Right ventricle myocardium inferior (tissue), 1 donor: ENCODE measurements at regions of chr13 and their contacts with region 1.

Region 1: GRCh38 chr13:106536244-106537034 is 977 bp upstream of the EFNB2 start:
- DNase-seq: peak; percentile 95
- ATAC-seq: peak; percentile 79

Region 2: DNA sequence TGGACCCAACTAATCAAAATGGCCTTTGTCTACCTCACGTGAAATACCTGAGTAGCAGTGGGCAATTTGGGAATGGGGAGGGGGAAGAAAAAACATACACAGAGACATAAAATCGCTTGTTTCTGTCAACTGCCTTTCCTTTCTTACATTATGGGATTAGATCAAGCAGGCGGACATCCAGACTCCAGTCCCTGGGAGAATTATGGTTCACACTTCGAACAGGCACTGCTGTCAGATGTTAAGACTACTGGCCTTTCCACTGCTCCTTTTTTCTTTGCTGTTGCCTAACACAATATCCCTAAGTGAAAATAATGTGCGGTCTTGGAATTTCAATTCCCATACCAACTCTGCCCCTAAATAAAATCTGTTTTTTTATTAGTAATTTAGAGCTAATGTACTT is 1750.5 kb before region 1 on chr13:
- intact Hi-C with region 1: loop called (anchors 10 kb)
- DNase-seq: no peak
- ATAC-seq: no peak

Region 3: DNA sequence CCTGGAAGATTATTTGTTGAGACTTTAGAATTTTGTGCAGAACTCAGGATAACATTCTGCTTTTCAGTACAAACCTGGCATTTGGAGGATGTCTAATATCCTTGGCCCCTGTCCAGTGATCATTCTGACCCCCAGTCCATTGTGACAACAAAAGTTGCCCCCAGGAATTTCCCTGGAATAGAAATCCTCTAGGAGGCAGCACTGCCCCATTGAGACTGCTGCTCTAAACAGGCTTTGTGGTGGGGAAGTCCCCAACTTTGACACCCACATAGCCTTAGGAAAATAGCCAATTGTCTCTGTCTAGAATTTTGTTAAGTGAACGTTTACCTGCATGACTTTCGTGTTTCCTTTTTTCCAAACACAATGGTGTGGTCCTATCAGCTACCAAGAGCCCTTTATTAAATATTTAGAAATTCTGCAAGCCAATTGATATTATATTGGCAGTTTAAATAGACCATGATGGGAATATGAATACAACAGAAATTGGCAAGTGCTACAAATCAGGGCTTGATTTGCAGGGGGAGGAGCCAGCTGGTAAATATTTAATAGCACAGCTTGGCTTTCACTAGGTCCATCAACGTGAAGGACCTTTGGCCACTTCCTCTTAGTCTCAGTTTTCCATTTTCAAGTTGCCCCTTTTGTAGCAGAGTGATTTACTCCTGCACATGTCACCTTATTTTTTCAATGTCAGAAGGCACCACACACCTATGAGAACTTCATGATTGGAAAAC is 452.7 kb before region 1 on chr13:
- intact Hi-C with region 1: loop called (anchors 2 kb)
- DNase-seq: no peak
- ATAC-seq: no peak

Region 4: DNA sequence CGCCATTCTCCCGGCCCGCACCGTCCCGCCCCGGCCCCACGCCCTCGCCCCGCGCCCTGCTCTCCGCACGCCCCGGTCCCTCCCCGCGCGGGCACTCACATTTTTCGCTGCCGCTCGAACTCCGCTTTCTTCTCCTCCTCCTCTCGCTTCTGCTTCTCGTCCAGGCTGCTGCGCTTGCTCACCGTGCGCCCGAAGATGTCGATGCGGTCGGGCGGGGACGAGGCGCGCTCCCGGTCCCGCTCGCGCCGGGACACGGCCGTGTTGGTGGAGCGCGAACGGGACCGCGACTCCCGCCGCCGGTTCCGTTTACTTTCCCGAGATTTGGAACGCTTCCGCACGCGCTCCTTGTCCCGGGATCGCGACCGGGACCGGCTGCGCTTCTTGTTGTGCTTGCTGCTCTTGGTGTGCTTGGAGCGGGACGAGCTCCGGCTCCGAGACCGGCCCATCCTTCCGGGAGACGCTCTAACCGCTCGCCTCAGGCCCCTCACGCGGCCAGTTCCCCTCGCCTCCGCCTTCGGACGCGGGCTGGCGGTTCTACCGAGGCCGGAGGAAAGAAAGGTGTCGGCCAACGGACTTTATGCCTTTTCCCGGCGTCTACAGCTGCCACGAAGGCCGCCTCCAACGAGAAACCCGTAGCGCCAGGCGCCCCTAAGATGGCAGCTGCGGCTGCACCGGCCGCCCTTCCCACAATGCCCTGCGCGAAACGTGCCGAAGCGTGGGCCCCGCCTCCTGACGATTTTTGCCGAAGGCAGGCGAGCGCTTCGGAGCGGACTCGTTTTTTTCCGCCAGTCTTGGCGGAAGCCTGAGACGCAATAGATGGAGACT is 31.2 kb after region 1 on chr13 and contains the start of gene ARGLU1:
- intact Hi-C with region 1: loop called (anchors 1 kb)
- DNase-seq: peak; percentile 97
- ATAC-seq: peak; percentile 96
- total RNA-seq, gene ARGLU1: 26.0 TPM

Region 5: DNA sequence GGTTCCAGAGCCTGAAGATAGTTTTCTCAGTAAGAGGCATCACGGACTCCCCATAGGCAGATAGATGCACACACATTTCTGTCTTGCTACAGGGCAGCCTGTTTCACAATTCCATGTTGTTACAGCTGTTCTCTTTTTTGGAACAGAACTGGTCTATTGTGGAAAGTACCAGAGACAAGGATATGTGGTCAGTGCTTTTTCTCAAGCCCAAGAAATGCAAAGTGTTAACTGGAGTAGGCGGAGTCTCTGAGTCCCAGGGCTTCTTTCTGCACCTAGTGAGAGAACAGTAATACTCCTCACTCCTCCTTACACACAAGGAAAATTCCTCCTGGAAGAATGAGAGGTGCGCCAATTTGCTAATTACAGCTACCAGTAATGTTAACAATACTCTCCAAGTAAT is 173.1 kb after region 1 on chr13:
- intact Hi-C with region 1: loop called (anchors 10 kb)
- DNase-seq: no peak
- ATAC-seq: peak; percentile 85

Region 6: GRCh38 chr13:107124129-107124718 is 587.8 kb after region 1 on chr13:
- intact Hi-C with region 1: loop called (anchors 10 kb)
- DNase-seq: no peak
- ATAC-seq: no peak